Aorta (tissue), 5 donors: ENCODE measurements at regions of chr5 and their contacts with region 1.

Region 1: DNA sequence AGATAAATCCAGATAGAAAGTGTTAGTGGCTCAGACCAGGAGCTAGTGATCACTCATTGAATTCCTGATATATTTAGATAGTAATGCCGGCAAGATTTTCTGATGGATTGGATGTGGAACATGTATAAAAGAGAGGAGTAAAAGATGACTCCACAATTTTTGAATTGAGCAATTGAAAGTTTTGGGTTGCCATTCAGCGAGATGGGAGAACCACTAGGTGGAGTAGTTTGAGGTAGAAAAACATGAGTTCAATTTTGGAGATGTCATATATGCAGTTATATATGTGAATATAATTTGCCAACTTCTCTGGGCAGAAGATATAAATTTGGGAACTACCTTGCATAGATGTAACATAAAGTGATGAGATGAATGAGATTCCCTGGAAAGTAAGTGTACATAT is 502.5 kb upstream of the SEMA6A start:
- DNase-seq: no peak
- ATAC-seq: no peak
- H3K4me3 ChIP-seq: no peak overlapping the region
- H3K27ac ChIP-seq: no peak overlapping the region
- H3K4me1 ChIP-seq: no peaks in the 10 kb centered on the region
- H3K27me3 ChIP-seq: no peaks in the 10 kb centered on the region

Region 2: DNA sequence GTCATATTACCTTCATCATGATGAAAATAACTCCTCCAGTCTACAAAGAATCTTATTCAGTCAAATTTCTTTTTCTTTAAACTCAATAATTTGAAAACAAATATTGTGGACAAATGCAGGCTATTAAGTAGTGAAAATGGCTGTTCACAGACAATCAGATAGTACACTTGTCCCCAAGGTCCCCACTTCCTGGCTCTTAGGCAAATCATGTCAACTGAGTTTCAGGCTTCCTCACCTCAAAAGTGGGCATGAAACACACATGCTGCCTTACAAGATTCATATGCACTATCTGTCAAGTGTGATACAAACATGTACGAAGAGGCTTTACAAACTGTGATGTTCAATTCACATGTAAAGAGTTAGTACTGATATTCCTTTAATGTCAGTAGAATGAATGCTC is 117.3 kb before region 1 on chr5:
- intact Hi-C with region 1: no loop called
- DNase-seq: no peak
- ATAC-seq: no peak
- H3K4me3 ChIP-seq: no peak overlapping the region
- H3K27ac ChIP-seq: no peak overlapping the region
- H3K4me1 ChIP-seq: no peaks in the 10 kb centered on the region
- H3K27me3 ChIP-seq: no peaks in the 10 kb centered on the region

Region 3: DNA sequence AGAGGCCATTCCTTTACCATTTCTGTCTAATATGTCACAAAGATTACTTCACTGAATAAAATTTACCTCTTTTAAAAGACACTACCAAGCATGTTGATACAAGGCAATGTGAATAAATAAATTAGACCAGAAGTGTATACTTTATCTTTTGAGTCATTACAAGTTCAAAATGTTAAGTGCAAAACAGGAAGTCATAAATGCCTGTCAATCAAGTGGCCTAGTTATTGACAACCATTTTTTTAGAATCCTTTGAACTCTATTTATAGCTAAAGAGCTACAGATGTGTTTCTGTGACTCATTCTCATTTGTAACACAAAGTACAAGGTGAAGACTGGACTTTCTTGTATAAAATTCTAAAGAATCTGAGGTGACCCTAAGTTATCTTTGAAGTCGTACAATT is 100.2 kb after region 1 on chr5:
- intact Hi-C with region 1: loop called in 1 of 2 experiments (anchors 5 kb)
- DNase-seq: no peak
- ATAC-seq: no peak
- H3K4me3 ChIP-seq: no peak overlapping the region
- H3K27ac ChIP-seq: no peak overlapping the region
- H3K4me1 ChIP-seq: no peaks in the 10 kb centered on the region
- H3K27me3 ChIP-seq: no peaks in the 10 kb centered on the region